ENCODE measurements at regions of chr10 and their contacts with region 1.

Region 1: GRCh38 chr10:103367782-103368518 is at the start of gene TAF5:
- DNase-seq: peak; percentile 89
- H3K4me3 Mint-ChIP-seq: peak within 1 kb of the TSS; percentile 89
- H3K27ac Mint-ChIP-seq: peak within 1 kb of the TSS; percentile 91
- H3K4me1 Mint-ChIP-seq: peaks cover 5% of the 10 kb centered on the region
- H3K27me3 Mint-ChIP-seq: no peaks in the 10 kb centered on the region
- total RNA-seq, gene TAF5: 10.4 and 11.0 TPM in 2 replicates

Region 2: GRCh38 chr10:101602761-101603398 is 1765.1 kb before region 1 on chr10:
- intact Hi-C with region 1: no loop called
- DNase-seq: peak; percentile 68
- H3K4me3 Mint-ChIP-seq: no peak overlapping the region
- H3K27ac Mint-ChIP-seq: no peak overlapping the region
- H3K4me1 Mint-ChIP-seq: no peaks in the 10 kb centered on the region
- H3K27me3 Mint-ChIP-seq: no peaks in the 10 kb centered on the region

Region 3: GRCh38 chr10:102853944-102854694 is 513.8 kb before region 1 on chr10 and contains the start of gene BORCS7:
- intact Hi-C with region 1: loop called (anchors 1 kb)
- DNase-seq: peak; percentile 84
- H3K4me3 Mint-ChIP-seq: peak within 1 kb of the TSS; percentile 82
- H3K27ac Mint-ChIP-seq: peak within 1 kb of the TSS; percentile 92
- H3K4me1 Mint-ChIP-seq: peaks cover 19% of the 10 kb centered on the region
- H3K27me3 Mint-ChIP-seq: no peaks in the 10 kb centered on the region
- total RNA-seq, gene BORCS7: 9.7 and 12.6 TPM in 2 replicates

Region 4: DNA sequence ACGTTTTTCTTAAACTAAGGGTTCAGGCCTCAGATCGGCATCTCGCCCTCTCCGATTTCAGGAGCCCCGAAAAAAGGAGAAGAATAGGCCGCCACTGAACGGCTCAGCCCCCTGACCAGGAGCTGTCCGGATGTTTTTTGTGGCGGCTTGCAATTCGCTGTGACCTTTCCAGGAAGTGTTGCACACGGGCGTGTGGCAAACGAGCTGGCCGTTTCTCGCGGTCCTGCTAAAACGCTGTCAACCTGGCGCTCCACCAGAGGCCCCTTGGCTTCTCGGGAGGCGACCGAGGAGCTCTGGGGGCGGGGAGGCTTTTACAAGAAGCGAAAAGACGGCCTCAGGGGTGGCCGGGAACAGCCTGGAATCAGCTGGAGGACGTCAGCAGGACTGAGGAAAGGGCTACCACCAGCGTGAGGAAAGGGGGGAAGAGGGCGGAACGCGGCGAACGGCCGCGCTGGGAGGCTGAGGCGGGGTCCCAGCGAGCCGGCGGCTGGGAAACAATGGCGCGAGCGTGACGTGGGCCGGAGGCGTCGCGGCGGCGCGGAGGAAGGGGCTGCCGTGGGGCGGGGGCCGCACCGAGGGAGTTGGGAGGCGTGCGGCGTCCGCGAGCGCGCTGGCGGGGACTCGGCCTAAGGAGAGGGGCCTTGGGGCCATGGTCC is 175.4 kb before region 1 on chr10:
- intact Hi-C with region 1: loop called (anchors 10 kb)
- DNase-seq: peak; percentile 64
- H3K4me3 Mint-ChIP-seq: peak overlapping the region; percentile 96
- H3K27ac Mint-ChIP-seq: peak overlapping the region; percentile 99
- H3K4me1 Mint-ChIP-seq: peaks cover 45% of the 10 kb centered on the region
- H3K27me3 Mint-ChIP-seq: no peaks in the 10 kb centered on the region

Region 5: DNA sequence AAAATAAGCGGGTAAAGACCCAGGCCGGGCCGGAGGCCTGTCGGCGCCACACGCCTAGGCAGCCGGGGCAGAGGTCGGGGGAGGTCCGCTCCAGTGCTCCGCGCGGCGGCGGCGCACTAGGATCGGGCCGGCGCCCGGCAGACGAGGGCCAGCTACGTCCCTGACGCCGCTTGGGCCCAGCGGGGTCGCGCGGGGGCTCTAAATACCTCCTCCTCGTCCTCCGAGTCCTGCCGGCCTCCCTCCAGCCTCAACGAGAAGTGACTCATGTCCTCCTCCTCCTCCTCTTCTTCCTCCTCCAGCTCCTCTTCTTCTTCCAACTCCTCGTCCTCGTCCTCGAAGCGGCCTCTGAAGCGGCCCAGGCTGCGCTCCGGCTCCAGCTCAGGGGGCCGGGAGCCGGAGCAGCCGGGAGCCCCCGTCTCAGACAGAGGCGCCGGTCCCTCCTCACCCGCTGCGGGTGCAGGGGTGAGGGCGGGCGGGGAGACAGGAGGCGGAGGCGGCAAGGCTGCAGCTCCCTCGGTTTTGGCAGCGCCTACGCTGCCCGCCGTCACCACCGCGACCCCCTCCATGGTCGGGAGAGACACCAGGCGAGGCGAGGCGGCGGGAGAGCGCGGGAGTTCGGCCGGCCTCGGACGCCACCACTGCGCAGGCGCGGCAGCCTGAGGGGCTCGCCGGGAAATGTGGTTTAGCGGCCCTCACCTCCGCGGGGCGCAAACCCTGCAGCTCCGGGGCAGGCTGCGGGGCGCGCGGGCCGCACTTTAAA is 17.3 kb before region 1 on chr10 and contains the start of gene PCGF6:
- intact Hi-C with region 1: loop called (anchors 1 kb)
- DNase-seq: peak; percentile 74
- H3K4me3 Mint-ChIP-seq: peak within 1 kb of the TSS; percentile 91
- H3K27ac Mint-ChIP-seq: peak within 1 kb of the TSS; percentile 89
- H3K4me1 Mint-ChIP-seq: peaks cover 4% of the 10 kb centered on the region
- H3K27me3 Mint-ChIP-seq: no peaks in the 10 kb centered on the region
- total RNA-seq, gene PCGF6: 19.3 and 21.0 TPM in 2 replicates

Region 6: GRCh38 chr10:103396064-103396788 is 28.3 kb after region 1 on chr10 and contains the starts of genes ATP5MK and PDCD11:
- intact Hi-C with region 1: loop called (anchors 1 kb)
- DNase-seq: peak; percentile 95
- H3K4me3 Mint-ChIP-seq: peak within 1 kb of the TSS; percentile 99
- H3K27ac Mint-ChIP-seq: peak within 1 kb of the TSS; percentile 96
- H3K4me1 Mint-ChIP-seq: peaks cover 58% of the 10 kb centered on the region
- H3K27me3 Mint-ChIP-seq: no peaks in the 10 kb centered on the region
- total RNA-seq, gene ATP5MK: 480 and 483 TPM in 2 replicates
- total RNA-seq, gene PDCD11: 98.4 and 99.0 TPM in 2 replicates

Region 7: GRCh38 chr10:103470761-103471653 is 103.1 kb after region 1 on chr10:
- intact Hi-C with region 1: loop called (anchors 5 kb)
- DNase-seq: peak; percentile 69
- H3K4me3 Mint-ChIP-seq: peak overlapping the region; percentile 27
- H3K27ac Mint-ChIP-seq: peak overlapping the region; percentile 89
- H3K4me1 Mint-ChIP-seq: peaks cover 71% of the 10 kb centered on the region
- H3K27me3 Mint-ChIP-seq: no peaks in the 10 kb centered on the region

Region 8: DNA sequence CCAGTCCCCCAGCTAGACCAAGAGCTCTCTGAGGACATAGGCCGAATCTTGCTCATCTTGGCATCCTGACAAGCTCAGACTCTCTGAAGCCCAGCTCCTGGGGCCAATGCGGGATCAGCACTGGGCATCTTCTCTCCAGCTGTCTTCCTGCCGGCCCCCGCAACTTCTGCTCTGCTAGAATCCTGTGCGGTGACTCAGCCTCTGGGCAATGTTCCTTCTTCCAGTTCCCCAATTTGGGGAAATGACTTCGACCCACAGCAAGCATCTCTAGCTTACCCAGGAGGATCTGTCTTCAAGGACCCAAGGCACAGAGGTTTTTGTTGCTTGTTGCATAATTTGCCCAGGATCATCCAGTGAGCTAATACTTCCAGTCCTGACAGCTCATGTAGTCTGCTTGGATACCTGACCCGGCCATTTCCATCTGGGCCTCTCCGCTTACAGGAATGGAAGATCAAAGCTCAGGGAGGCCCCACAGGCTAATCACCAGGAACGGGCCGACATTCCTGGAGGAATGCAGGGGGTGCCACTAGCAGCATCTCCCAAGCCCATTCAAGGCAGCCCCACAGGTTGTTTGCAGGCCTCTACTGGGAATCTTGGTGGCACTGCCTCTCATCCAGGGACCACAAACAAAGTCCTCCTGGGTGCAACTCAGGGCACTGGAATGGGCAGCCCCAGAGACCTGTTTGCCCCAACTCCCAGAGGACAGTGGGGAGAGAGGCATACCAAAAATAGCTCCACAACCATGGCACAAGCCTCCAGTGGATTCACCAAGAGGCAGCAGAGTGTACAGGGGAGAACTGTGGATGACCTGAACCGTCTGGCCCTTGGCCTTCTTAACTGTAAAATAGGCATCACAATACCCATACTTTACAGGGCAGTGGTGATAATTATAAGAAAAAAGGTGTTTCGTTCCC is 277.4 kb after region 1 on chr10:
- intact Hi-C with region 1: no loop called
- DNase-seq: no peak
- H3K4me3 Mint-ChIP-seq: no peak overlapping the region
- H3K27ac Mint-ChIP-seq: no peak overlapping the region
- H3K4me1 Mint-ChIP-seq: no peaks in the 10 kb centered on the region
- H3K27me3 Mint-ChIP-seq: peaks cover 2% of the 10 kb centered on the region

Region 9: GRCh38 chr10:103820101-103821062 is 452.4 kb after region 1 on chr10:
- intact Hi-C with region 1: no loop called
- DNase-seq: no peak
- H3K4me3 Mint-ChIP-seq: no peak overlapping the region
- H3K27ac Mint-ChIP-seq: no peak overlapping the region
- H3K4me1 Mint-ChIP-seq: peaks cover 10% of the 10 kb centered on the region
- H3K27me3 Mint-ChIP-seq: peaks cover 26% of the 10 kb centered on the region